ENCODE measurements at regions of chr19 and their contacts with region 1.

Region 1: DNA sequence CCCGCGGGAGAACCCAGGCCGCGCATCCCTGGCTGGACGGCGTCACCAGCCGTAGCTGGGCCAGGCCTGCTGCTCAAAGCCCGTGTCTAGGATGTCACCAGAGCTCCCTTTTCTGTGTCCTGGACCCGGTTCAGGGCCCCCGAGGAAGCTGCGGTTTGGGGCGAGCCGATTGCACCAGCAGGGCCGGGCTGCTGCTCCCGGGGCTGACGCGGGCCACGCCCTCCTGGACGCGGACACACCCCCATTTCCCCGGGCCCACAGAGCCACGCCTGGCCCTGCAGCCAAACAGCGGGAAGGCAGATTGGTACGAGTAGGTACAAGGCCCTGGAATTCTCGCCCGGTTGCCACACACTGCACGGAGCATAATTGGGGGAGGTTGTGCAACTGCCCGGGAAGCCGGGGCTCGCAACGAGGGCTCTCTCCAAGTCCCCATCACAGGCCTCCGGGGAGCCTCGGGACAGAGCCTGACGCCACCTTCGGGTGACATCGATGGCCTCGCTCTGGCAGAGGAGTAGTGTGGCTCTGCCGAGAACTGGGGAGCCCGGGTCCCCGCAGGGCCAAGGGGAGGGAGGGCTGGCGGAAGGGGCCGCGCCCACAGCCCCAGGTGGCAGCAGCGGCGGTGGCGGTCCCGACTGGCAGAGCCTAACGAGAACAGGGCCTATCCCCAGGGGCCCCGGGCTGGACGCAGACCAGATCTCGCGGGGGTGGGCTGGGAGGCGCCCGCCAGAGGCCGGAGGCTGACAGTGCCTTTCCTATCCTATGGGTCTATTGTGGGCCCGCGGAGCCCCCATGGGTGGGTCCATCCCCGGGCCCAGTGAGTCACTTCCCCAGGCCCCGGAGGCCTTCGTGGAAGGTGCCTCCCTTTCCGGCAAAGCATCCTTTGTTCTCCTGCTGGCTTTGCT is 23.5 kb downstream of the KCTD15 start:
- DNase-seq: peak; percentile 85
- ATAC-seq: peak; percentile 68
- H3K4me3 ChIP-seq: peak overlapping the region; percentile 65
- H3K27ac ChIP-seq: peak overlapping the region; percentile 99
- H3K4me1 ChIP-seq: peaks cover 31% of the 10 kb centered on the region
- H3K27me3 ChIP-seq: no peaks in the 10 kb centered on the region
- CTCF ChIP-seq: no peak; the same call in 1 of the 2 replicates

Region 2: DNA sequence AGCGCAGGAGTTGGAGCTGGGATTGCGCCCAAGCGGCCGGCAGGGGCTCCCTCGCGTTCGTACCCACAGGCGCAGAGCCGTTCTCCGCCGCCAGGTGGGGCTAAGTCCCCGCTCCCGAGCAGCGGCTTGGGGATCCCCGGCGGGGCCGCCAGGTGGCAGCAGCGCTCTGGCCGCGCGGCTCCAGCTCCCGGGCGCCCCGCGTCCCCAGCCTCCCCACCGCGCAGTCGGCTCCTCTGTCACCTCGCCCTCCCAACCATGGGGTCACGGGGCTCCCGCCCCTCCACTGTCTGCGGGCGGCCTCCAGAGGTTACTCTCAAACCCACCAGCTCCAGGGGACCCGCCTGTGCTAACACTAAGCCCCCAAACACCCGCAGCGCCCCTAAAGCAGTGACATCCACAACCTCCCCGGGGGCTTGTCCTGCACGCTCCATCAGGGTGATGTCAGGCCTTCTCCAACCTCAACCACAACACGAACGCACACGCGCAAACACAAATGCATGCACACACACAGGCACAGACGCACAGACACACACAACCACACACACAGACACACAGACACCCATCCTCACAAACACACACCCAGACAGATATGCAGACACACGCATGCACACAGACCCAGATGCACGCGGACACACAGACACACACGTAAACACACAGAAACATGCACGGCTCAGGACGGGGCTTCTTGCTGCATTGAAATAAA is 41.9 kb before region 1 on chr19:
- CTCF ChIA-PET with region 1: interaction called, 5 read pairs
- POLR2A ChIA-PET with region 1: interaction called, 16 read pairs
- intact Hi-C with region 1: no loop called
- DNase-seq: peak; percentile 74
- ATAC-seq: peak; percentile 82
- H3K4me3 ChIP-seq: peak overlapping the region; percentile 51
- H3K27ac ChIP-seq: no peak overlapping the region
- H3K4me1 ChIP-seq: peaks cover 4% of the 10 kb centered on the region; the same call in 1 of the 2 replicates
- H3K27me3 ChIP-seq: no peaks in the 10 kb centered on the region
- CTCF ChIP-seq: peak; percentile 96

Region 3: GRCh38 chr19:33785795-33786194 is 34.3 kb before region 1 on chr19:
- CTCF ChIA-PET with region 1: interaction called, 6 read pairs
- POLR2A ChIA-PET with region 1: interaction called, 16 read pairs
- intact Hi-C with region 1: loop called (anchors 5 kb)
- DNase-seq: peak; percentile 70
- ATAC-seq: peak; percentile 77
- H3K4me3 ChIP-seq: no peak overlapping the region
- H3K27ac ChIP-seq: peak overlapping the region; percentile 35
- H3K4me1 ChIP-seq: peaks cover 24% of the 10 kb centered on the region
- H3K27me3 ChIP-seq: no peaks in the 10 kb centered on the region
- CTCF ChIP-seq: no peak

Region 4: GRCh38 chr19:33795370-33796163 is 24.6 kb before region 1 on chr19:
- CTCF ChIA-PET with region 1: interaction called, 6 read pairs
- POLR2A ChIA-PET with region 1: interaction called, 17 read pairs
- intact Hi-C with region 1: loop called (anchors 2 kb)
- DNase-seq: peak; percentile 70
- ATAC-seq: peak; percentile 66
- H3K4me3 ChIP-seq: peak overlapping the region; percentile 74
- H3K27ac ChIP-seq: peak overlapping the region; percentile 80
- H3K4me1 ChIP-seq: peaks cover 6% of the 10 kb centered on the region; the same call in 1 of the 2 replicates
- H3K27me3 ChIP-seq: no peaks in the 10 kb centered on the region
- CTCF ChIP-seq: peak; percentile 78

Region 5: GRCh38 chr19:33831825-33832224 is 11.7 kb after region 1 on chr19:
- CTCF ChIA-PET with region 1: no interaction called
- POLR2A ChIA-PET with region 1: no interaction called
- intact Hi-C with region 1: no loop called
- DNase-seq: no peak
- ATAC-seq: no peak
- H3K4me3 ChIP-seq: no peak overlapping the region
- H3K27ac ChIP-seq: no peak overlapping the region
- H3K4me1 ChIP-seq: no peaks in the 10 kb centered on the region; the same call in 1 of the 2 replicates
- H3K27me3 ChIP-seq: no peaks in the 10 kb centered on the region
- CTCF ChIP-seq: no peak

Region 6: GRCh38 chr19:33998739-33999345 is 178.7 kb after region 1 on chr19:
- CTCF ChIA-PET with region 1: interaction called, 4 read pairs
- POLR2A ChIA-PET with region 1: no interaction called
- intact Hi-C with region 1: loop called (anchors 10 kb)
- DNase-seq: peak; percentile 47
- ATAC-seq: no peak
- H3K4me3 ChIP-seq: peak overlapping the region; percentile 56
- H3K27ac ChIP-seq: no peak overlapping the region
- H3K4me1 ChIP-seq: no peaks in the 10 kb centered on the region
- H3K27me3 ChIP-seq: peaks cover 11% of the 10 kb centered on the region; the same call in 1 of the 2 replicates
- CTCF ChIP-seq: peak; percentile 61

Measured in PC-3 (cell line).